Transverse colon (tissue), 4 donors: ENCODE measurements at regions of chrX and their contacts with region 1.

Region 1: DNA sequence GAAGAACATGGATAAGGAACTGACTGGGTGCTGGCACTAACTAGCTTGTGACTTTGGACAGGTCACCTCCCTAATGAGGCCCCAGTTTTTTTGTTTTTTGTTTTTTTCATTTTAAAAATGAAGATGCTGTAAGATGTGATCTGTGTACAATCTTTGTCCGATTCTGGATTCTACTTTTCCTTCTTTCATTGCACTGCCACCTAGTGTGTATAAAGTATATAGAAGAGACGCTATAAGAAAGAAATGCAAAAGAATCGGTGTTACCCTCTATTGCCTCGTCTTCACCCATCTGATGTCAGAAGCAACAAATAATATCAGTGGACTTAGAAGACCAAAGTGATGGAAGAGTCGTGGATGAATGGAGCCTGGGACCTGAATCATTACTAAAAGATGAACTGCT is 58.6 kb upstream of the P2RY10 start:
- DNase-seq: no peak
- H3K4me3 ChIP-seq: no peak overlapping the region
- H3K27ac ChIP-seq: no peak overlapping the region
- H3K4me1 ChIP-seq: no peaks in the 10 kb centered on the region
- H3K27me3 ChIP-seq: no peaks in the 10 kb centered on the region
- CTCF ChIP-seq: peak; percentile 14 to 43 (median 28)
- EP300 ChIP-seq: no peak
- POLR2A ChIP-seq: no peak

Region 2: DNA sequence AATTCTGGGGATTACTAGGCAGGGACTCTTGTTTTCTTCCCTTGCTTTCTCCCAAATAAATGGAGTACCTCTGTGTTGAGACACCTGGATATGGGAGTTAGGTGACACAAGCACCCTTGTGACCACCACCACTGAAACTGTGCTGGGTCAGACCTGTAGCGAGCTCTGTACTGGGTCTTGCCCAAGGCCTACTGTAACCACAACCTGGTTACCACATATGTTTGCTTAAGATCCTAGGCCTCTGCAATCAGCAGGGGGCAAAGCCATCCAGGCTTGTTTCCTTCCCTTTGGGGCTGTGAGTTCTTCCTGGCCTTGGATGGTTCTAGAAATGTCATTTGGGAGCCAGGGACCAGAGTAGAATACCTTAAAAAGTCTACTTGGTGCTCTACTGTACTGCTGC is 89.6 kb before region 1 on chrX:
- in situ Hi-C with region 1: loop called in 1 of 4 experiments (anchors 25 kb)
- intact Hi-C with region 1: no loop called
- DNase-seq: no peak
- H3K4me3 ChIP-seq: no peak overlapping the region
- H3K27ac ChIP-seq: no peak overlapping the region
- H3K4me1 ChIP-seq: no peaks in the 10 kb centered on the region
- H3K27me3 ChIP-seq: no peaks in the 10 kb centered on the region
- CTCF ChIP-seq: no peak
- EP300 ChIP-seq: no peak
- POLR2A ChIP-seq: no peak

Region 3: GRCh38 chrX:78979789-78980464 is 93.4 kb after region 1 on chrX:
- in situ Hi-C with region 1: no loop called
- intact Hi-C with region 1: no loop called
- DNase-seq: no peak
- H3K4me3 ChIP-seq: no peak overlapping the region
- H3K27ac ChIP-seq: no peak overlapping the region
- H3K4me1 ChIP-seq: no peaks in the 10 kb centered on the region
- H3K27me3 ChIP-seq: no peaks in the 10 kb centered on the region
- CTCF ChIP-seq: no peak
- EP300 ChIP-seq: no peak
- POLR2A ChIP-seq: no peak